ENCODE measurements at regions of chr4 and their contacts with region 1.

Region 1: DNA sequence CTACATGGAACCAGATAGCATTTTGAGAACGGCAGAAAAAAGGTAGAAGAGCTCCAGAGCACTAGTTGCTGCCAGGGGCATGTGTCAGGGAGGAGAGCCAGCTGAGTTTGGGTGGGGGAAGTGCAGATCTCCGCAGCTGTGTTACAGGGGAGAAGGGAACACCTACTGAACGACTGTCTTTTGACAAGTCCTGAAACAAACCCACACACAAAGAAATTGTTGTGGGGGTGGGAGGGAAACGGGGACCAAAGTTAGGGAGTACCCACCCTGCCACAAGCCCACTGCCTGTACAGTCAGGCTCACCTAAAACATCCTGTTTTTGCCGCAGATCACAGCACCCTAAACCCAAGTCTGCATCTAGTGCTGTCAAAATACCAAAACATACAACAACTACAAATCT is 55.5 kb downstream of the LEF1 start:
- DNase-seq: peak; percentile 57
- ATAC-seq: peak; percentile 53
- H3K4me3 Mint-ChIP-seq: peak overlapping the region; percentile 72
- H3K27ac Mint-ChIP-seq: peak overlapping the region; percentile 96
- H3K4me1 Mint-ChIP-seq: peaks cover 90% of the 10 kb centered on the region
- H3K27me3 Mint-ChIP-seq: no peaks in the 10 kb centered on the region

Region 2: GRCh38 chr4:107902715-107903114 is 210.5 kb before region 1 on chr4:
- POLR2A ChIA-PET with region 1: no interaction called
- DNase-seq: no peak
- ATAC-seq: no peak
- H3K4me3 Mint-ChIP-seq: no peak overlapping the region
- H3K27ac Mint-ChIP-seq: no peak overlapping the region
- H3K4me1 Mint-ChIP-seq: no peaks in the 10 kb centered on the region
- H3K27me3 Mint-ChIP-seq: peaks cover 19% of the 10 kb centered on the region

Region 3: GRCh38 chr4:108149588-108150380 is 36.6 kb after region 1 on chr4:
- POLR2A ChIA-PET with region 1: interaction called, 39 read pairs
- DNase-seq: no peak
- ATAC-seq: no peak
- H3K4me3 Mint-ChIP-seq: peak overlapping the region; percentile 58
- H3K27ac Mint-ChIP-seq: peak overlapping the region; percentile 26
- H3K4me1 Mint-ChIP-seq: peaks cover 68% of the 10 kb centered on the region
- H3K27me3 Mint-ChIP-seq: no peaks in the 10 kb centered on the region

Region 4: DNA sequence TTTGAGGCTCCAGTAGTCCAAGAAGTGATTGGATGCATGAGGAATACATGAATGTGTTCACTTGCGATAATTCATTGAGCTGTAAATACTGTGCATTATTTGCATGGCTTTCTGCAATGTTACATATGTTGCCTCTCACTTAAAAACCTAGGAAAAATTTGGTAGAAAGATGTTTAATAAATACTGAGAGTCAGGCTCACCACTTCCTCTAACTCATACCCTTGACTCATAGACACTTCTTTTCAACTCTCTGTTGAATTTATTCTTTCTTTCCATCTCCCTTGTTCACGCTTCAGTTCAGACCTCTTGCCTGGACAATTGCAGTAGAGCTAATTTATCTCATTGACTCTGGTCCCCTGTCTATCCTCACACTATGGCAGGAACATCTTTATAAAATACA is 91.3 kb after region 1 on chr4:
- POLR2A ChIA-PET with region 1: no interaction called
- DNase-seq: no peak
- ATAC-seq: peak; percentile 39
- H3K4me3 Mint-ChIP-seq: no peak overlapping the region
- H3K27ac Mint-ChIP-seq: no peak overlapping the region
- H3K4me1 Mint-ChIP-seq: peaks cover 20% of the 10 kb centered on the region
- H3K27me3 Mint-ChIP-seq: peaks cover 1% of the 10 kb centered on the region

Region 5: GRCh38 chr4:108270466-108271450 is 157.5 kb after region 1 on chr4:
- POLR2A ChIA-PET with region 1: no interaction called
- DNase-seq: no peak
- ATAC-seq: peak; percentile 39
- H3K4me3 Mint-ChIP-seq: no peak overlapping the region
- H3K27ac Mint-ChIP-seq: no peak overlapping the region
- H3K4me1 Mint-ChIP-seq: peaks cover 3% of the 10 kb centered on the region
- H3K27me3 Mint-ChIP-seq: no peaks in the 10 kb centered on the region

Measured in activated naive CD8-positive, alpha-beta T cell treated with anti-CD3 and anti-CD28 coated beads, Interleukin-2, amount 10 ng/mL, durations not matched to agents 7 days and 5 days (primary cell).